Thyroid gland (tissue), 4 donors: ENCODE measurements at regions of chr5 and their contacts with region 1.

Region 1: GRCh38 chr5:55172051-55172899 is 702 bp downstream of the CDC20B start:
- DNase-seq: peak; percentile 41 to 53
- H3K4me3 ChIP-seq: peak overlapping the region in 2 of 3 donors; percentile 24 to 35
- H3K27ac ChIP-seq: no peak overlapping the region
- H3K4me1 ChIP-seq: peaks cover 13 to 19% of the 10 kb centered on the region in 2 donors
- H3K27me3 ChIP-seq: no peaks in the 10 kb centered on the region
- CTCF ChIP-seq: peak in 5 of 6 experiments; percentile 65 to 89 (median 83)
- POLR2A ChIP-seq: no peak

Region 2: GRCh38 chr5:54753034-54753433 is 419.2 kb before region 1 on chr5:
- intact Hi-C with region 1: no loop called
- DNase-seq: no peak
- H3K4me3 ChIP-seq: no peak overlapping the region
- H3K27ac ChIP-seq: no peak overlapping the region
- H3K4me1 ChIP-seq: no peaks in the 10 kb centered on the region
- H3K27me3 ChIP-seq: no peaks in the 10 kb centered on the region
- CTCF ChIP-seq: no peak
- POLR2A ChIP-seq: no peak

Region 3: DNA sequence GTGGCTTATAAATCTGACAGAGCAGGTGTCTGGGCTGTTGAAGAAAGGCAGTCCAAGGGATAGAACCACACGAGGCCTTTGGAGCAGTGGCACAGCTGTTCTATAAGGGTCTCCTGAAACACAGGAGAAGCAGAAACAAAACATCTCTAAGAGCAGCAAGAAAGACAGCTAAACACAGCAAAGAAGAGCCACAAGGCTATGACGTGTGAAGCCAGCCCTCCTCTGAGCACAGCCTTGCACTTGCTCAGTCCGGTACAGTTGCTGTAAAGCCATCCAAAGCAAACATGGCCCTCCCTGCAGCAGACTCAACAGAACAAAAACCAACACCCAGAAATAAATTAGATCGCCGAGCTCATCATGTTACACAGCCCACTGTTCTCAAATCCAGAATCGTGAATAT is 150.9 kb before region 1 on chr5:
- intact Hi-C with region 1: no loop called
- DNase-seq: no peak
- H3K4me3 ChIP-seq: no peak overlapping the region
- H3K27ac ChIP-seq: no peak overlapping the region
- H3K4me1 ChIP-seq: no peaks in the 10 kb centered on the region
- H3K27me3 ChIP-seq: no peaks in the 10 kb centered on the region
- CTCF ChIP-seq: no peak
- POLR2A ChIP-seq: no peak

Region 4: DNA sequence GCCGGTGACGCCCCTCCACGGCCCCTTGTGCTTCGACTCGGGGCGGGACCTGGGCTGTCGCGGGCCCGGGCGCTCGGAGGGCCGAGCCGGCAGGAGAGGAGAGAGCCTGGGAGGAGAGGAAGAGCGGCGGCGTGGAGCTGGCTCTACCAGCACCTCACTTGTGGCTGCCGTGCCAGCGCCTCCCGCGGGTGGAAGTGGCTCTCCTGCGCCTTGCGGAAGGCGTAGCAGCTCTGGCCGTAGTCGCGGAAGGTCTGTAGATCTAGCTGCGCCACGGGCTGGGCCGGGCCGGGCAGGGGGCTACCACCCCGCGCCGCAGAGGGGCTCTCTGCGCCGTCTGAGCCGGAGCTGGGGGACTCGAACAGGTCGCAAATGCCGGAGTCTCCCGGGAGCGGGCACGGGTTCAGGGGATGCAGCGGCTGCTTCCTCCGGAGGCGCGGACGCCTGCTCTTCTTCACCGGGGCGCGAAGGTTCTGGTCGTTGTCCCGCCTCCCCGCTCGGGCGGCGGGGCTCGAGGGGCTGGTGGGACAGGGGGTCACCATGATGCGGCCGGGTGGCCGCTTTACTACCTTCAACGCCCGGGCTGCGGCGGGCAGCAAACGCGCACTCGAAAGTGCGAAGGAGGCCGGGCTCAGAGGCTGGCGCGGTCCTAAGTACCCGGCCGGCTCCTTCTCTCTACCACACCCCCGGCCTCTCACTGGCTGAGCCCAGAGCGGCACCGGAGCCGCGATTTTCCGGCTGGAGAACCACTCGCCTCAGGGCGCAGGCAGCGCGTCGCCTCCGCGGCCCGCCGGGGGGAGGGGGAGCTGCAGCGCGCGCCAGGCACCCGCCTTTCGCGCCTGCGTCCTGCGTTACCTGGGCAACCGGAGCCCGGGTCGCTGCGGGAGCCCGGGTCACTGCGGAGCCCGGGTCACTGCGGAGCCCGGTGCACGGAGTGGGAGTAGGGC is 61.0 kb after region 1 on chr5 and contains the start of gene CCNO:
- intact Hi-C with region 1: loop called (anchors 5 kb)
- DNase-seq: peak; percentile 91 to 92
- H3K4me3 ChIP-seq: peak within 1 kb of the TSS; percentile 19 to 89 (median 75)
- H3K27ac ChIP-seq: peak within 1 kb of the TSS; percentile 78 to 91 (median 84)
- H3K4me1 ChIP-seq: peaks cover 21 to 25% of the 10 kb centered on the region in 2 donors
- H3K27me3 ChIP-seq: no peaks in the 10 kb centered on the region
- CTCF ChIP-seq: no peak
- POLR2A ChIP-seq: peak in 1 of 2 donors; percentile 88
- total RNA-seq, gene CCNO: 9.7 to 14.7 (median 11.7) TPM

Region 5: DNA sequence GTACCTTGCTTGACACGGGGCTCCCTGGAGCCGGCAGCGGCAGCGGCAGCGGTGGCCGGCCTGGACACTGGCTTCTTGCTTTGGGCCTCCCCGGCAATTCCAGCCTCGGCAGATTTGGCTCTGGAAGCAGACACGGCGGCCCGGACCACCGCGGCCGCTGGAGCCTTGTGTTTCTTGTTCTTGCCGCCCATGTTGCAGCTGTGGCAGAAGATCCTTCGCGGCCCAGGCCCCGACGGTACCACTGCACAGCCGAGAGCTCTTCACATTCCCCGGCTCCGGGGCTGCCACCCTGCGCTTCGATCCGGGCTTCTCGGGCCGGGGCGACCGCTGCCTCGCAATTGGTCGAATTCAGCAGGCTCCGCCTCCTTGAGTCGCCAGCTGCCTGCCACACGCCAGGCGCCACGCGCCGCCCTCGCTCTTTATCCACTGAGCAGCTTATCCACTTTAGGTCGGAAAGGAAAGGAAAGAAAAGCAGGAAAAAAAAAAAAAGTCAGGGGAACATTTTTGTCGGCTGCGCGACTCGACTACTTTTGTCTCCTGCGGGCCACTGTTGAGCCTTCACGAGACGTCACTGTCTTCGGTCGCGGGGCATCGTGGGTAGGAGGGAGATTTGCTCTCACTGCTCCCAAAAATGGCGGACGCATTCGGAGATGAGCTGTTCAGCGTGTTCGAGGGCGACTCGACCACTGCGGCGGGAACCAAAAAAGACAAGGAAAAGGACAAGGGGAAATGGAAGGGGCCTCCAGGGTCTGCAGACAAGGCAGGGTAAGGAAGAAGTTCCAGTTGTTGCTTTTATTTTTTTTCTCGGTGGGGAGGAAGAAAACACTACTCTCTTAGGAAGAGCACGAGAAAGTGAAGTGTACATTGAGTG is 135.3 kb after region 1 on chr5 and contains the starts of genes DHX29 and MTREX:
- intact Hi-C with region 1: loop called (anchors 10 kb)
- DNase-seq: peak; percentile 95
- H3K4me3 ChIP-seq: peak within 1 kb of the TSS; percentile 41 to 87 (median 52)
- H3K27ac ChIP-seq: peak within 1 kb of the TSS; percentile 91 to 95 (median 95)
- H3K4me1 ChIP-seq: peaks cover 44 to 56% of the 10 kb centered on the region in 2 donors
- H3K27me3 ChIP-seq: no peaks in the 10 kb centered on the region
- CTCF ChIP-seq: peak in 1 of 6 experiments; percentile 12
- POLR2A ChIP-seq: peak; percentile 55 to 93
- total RNA-seq, gene DHX29: 39.1 to 54.0 (median 47.0) TPM
- total RNA-seq, gene MTREX: 86.3 to 94.4 (median 92.6) TPM